GM23248 (cell line): ENCODE measurements at regions of chr18 and their contacts with region 1.

Region 1: DNA sequence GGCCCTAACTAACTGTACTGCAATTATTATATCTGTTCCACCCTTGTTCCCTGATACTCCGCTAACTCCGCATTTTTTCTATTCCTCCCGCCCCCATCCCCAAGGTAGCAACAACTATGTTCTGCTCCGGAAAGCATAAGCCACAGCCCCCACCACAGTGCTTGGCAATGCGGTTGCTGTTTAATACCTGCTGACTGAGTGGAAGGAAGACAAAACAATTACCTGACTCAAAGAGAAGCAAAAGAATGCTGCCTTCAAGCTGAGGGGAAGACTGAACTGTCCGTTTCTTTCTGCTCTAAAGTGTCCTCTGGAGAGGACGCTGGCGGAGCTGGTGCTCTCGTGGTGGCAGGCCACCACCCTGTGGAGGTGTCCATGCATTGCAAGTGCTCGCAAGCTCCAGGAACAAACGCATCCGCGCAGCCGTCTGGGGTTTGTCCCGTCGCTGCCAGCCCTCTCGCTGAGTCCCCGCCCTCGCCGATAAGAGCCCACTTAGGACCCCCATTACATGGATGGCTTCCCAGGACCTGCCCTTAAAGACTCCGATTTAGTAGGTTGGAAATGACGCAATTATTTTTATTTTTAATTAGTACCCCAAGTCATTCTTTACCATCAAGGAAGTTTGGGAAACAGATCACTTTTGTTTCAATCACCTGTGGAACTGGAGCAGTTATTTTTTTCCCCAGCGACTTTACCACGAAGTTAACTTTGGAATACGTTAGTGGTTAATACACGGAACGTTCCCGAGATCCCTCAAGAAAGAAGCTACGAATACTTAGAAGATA is 1.6 kb upstream of the MYL12A start:
- DNase-seq: peak; percentile 95
- H3K4me3 ChIP-seq: peak overlapping the region; percentile 99
- H3K27ac ChIP-seq: peak overlapping the region; percentile 95
- H3K4me1 ChIP-seq: peaks cover 16% of the 10 kb centered on the region
- H3K27me3 ChIP-seq: no peaks in the 10 kb centered on the region

Region 2: DNA sequence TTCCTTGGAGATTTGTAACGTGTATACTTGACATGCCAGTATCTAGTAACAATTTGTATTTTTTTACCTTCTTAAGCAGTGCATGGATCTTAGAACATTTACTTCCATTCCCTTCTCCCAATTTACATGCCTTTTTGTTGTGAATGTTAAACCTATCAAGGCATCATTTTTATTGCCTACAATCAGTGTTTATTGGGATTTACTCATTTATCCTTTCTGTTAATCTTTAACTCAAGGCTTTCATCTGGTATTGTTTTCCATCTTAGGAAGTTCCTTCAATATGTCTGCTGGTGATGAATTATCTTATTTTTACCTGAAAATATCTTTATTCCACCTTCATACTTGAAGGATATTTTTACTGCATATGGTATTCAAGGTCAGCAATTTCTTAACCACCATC is 487.7 kb before region 1 on chr18:
- in situ Hi-C with region 1: loop called (anchors 10 kb)
- DNase-seq: no peak
- H3K4me3 ChIP-seq: no peak overlapping the region
- H3K27ac ChIP-seq: no peak overlapping the region
- H3K4me1 ChIP-seq: no peaks in the 10 kb centered on the region
- H3K27me3 ChIP-seq: no peaks in the 10 kb centered on the region

Region 3: DNA sequence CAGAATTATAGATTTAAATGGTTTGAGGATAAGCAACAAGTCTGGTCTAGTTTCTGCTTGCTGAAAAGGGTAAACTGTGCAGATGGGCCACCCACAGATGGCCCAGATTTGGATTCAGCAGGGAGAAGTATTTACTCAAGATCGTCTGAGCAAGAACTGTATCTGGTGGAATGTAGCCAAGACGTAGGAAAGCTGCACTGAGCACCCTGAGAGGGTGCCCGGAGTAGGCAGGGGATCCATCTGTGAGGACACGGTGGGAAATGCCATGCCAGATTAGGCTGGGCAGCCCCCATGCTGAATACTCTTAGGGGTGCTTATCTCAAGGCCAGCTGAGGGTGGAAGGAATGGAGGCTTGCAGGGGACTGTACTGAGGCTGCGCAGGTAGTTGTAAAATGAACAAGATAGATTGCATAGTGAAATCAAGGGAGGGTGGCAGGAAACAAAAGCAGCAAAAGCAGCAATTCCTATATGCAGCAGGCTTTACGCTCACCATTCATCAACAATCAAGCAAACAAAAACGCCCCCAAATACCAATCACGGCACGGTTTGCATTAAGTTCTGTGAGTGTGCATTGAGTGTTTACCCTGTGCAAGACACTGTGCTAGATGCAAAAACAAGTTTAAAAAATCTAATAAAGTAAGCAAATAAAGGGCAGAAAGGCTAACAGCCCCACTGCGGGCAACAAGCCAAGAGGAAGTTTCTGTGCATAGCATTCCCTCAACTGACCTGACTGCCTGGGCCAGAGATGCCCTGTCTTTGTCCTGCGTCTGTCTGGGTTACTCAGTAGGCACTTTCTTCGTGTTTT is 200.9 kb before region 1 on chr18:
- in situ Hi-C with region 1: no loop called
- DNase-seq: no peak
- H3K4me3 ChIP-seq: no peak overlapping the region
- H3K27ac ChIP-seq: no peak overlapping the region
- H3K4me1 ChIP-seq: no peaks in the 10 kb centered on the region
- H3K27me3 ChIP-seq: no peaks in the 10 kb centered on the region